H1 (cell line): ENCODE measurements at regions of chr2 and their contacts with region 1.

Region 1: DNA sequence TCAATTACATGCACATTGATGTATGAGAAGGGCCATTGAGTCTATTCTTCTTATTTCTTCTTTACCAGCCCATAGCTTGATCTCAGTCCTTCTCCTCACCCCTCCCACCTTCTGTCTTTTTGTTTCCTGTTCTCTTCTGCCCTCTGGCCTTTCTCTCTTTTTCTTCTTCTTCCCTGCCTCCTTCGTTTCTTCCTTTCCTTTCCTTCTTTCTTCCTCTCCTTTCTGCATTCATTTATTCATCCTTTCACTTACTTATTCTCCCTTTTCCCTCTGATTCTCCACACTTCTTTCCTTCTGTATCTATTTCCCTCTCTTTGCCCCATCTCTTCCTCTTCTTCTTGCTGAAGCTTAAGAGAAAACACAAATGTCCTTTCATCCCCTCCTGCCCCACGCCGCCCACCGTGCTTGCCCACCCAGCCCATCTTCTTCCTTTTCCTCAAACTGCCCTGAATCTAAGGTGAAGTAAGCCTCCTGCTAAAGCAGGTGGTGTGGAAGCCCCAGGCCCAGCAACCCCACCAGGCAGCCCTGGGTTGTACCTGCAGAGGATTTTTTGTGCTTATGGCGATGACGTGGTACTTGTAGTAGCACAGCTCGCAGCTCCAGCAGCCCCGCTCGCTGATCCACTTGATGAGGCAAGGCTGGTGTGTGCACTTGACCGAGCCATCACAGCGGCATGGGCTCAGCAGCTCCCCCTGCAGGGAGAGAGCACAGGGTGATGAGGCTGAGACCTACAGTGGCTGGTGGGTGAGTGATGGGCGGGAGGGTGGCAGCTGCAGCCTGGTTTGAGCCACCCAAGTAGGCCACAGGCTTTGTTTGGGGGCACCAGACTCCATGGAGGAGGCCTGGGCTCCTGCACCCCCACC is 89.0 kb downstream of the MARCHF4 start:
- DNase-seq: peak; percentile 83 to 95
- H3K4me3 ChIP-seq: no peak overlapping the region
- H3K27ac ChIP-seq: no peak overlapping the region
- H3K4me1 ChIP-seq: peaks cover 11 to 38% (median 18%) of the 10 kb centered on the region in 4 experiments
- H3K27me3 ChIP-seq: no peaks in the 10 kb centered on the region
- CTCF ChIP-seq: peak; percentile 88 to 100 (median 99)
- EP300 ChIP-seq: no peak
- POLR2A ChIP-seq: no peak
- RAD21 ChIP-seq: peak; percentile 76 to 83

Region 2: DNA sequence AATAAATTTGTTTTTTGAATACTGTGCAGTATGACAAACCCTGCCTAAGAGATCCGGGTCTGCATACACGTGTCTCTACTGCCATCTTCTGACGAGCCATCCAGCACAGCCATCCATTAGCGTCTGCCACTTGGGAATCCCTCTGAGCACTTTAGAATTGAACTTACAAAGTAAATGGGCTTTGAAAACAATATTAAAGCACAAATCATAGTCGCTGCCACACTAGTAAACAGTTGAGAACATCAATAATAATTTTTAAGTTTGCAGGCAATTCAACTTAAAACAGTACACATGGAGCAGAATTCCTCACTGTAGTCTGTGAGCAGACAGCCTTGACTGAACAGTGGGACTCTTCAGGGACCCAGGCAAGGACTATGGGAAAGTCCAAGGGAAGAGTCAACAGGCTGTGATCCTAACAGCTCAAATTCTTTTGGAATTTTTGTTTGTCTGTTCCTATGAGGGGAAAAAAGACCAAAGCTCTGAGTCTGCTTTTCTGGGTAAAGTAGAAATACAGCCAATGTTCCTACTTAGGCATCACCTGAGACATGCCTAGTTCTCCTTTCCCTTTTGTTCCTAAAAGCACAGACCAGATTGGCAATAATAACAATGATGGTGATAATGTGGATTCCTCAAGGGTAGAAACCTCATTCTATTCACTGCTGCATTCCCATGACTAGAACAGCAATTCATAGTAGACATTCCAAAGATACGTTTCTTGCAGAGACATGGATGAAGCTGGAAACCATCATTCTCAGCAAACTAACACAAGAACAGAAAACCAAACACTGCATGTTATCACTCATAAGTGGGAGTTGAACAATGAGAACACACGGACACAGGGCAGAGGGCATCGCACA is 362.8 kb before region 1 on chr2:
- CTCF ChIA-PET with region 1: no interaction called
- POLR2A ChIA-PET with region 1: no interaction called
- DNase-seq: peak in 1 of 2 experiments; percentile 64
- H3K4me3 ChIP-seq: no peak overlapping the region
- H3K27ac ChIP-seq: no peak overlapping the region
- H3K4me1 ChIP-seq: peaks cover 0 to 16% (median 6%) of the 10 kb centered on the region in 4 experiments; a peak in 3 of 7 replicates
- H3K27me3 ChIP-seq: no peaks in the 10 kb centered on the region
- CTCF ChIP-seq: peak; percentile 80 to 88 (median 81)
- EP300 ChIP-seq: no peak
- POLR2A ChIP-seq: no peak
- RAD21 ChIP-seq: peak; percentile 98

Region 3: GRCh38 chr2:216222650-216223352 is 60.5 kb before region 1 on chr2:
- CTCF ChIA-PET with region 1: interaction called, 28 read pairs
- POLR2A ChIA-PET with region 1: no interaction called
- DNase-seq: no peak
- H3K4me3 ChIP-seq: no peak overlapping the region
- H3K27ac ChIP-seq: no peak overlapping the region
- H3K4me1 ChIP-seq: no peaks in the 10 kb centered on the region
- H3K27me3 ChIP-seq: no peaks in the 10 kb centered on the region
- CTCF ChIP-seq: peak; percentile 71 to 77 (median 76)
- EP300 ChIP-seq: no peak
- POLR2A ChIP-seq: no peak
- RAD21 ChIP-seq: peak; percentile 87

Region 4: DNA sequence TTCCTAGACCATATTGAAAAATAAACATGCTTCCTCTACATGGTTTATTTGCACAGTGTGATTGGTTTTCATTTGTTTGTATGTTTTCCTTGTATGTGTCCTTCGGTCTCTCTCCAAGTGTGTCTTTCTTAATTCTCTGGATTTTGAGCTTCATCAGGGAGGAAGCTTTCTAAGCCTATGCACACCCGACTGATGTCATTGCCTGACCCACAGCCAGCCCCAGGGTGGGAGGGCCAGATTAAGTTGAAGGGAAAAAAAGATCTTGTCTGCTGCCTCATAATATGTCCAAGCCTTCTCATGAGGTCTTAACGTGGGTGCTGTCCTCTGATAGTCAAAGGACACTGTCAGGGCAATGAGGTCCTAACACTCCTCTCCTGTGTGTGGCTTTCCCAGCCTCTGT is 26.2 kb before region 1 on chr2:
- CTCF ChIA-PET with region 1: interaction called, 13 read pairs
- POLR2A ChIA-PET with region 1: no interaction called
- DNase-seq: no peak
- H3K4me3 ChIP-seq: no peak overlapping the region
- H3K27ac ChIP-seq: no peak overlapping the region
- H3K4me1 ChIP-seq: no peaks in the 10 kb centered on the region
- H3K27me3 ChIP-seq: no peaks in the 10 kb centered on the region; a peak in 1 of 7 replicates
- CTCF ChIP-seq: no peak
- EP300 ChIP-seq: no peak
- POLR2A ChIP-seq: no peak
- RAD21 ChIP-seq: no peak

Region 5: GRCh38 chr2:216308576-216308975 is 25.3 kb after region 1 on chr2:
- CTCF ChIA-PET with region 1: interaction called, 29 read pairs
- POLR2A ChIA-PET with region 1: interaction called, 3 read pairs
- DNase-seq: no peak
- H3K4me3 ChIP-seq: no peak overlapping the region
- H3K27ac ChIP-seq: no peak overlapping the region
- H3K4me1 ChIP-seq: peaks cover 0 to 4% (median 3%) of the 10 kb centered on the region in 4 experiments; a peak in 4 of 7 replicates
- H3K27me3 ChIP-seq: no peaks in the 10 kb centered on the region
- CTCF ChIP-seq: no peak
- EP300 ChIP-seq: no peak
- POLR2A ChIP-seq: no peak
- RAD21 ChIP-seq: no peak

Region 6: DNA sequence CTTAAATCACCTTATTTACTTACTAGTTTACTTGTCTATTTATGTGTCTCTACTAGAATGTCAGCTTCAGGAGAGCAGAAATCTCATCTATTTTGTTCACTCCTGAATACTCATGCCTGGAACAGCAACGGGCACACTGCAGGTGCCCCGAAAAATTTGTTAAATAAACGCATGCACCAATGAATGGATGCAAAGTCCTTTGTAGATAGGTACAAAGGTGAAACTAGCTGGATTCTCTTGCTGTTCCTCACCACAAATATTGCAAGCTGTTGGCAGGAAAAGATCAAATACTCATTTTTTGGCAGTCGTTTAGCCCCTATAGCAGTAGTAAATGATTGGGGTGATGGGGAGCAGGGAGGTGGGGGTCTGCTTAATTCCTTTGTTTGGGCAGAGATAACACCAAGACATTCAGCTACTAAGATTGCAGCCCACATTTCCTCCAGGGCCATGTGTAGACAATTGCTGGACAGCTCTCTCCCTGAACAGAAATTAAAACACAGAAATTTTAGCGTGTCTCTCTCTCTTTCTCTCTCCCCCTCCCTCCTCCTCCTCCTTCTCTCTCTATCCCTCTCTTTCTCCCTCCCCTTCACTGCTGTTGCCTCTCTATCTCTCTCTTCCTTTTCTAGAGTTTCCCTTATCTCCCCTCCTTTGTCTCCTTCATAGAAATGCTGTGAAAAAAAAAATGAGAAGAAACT is 83.7 kb after region 1 on chr2:
- CTCF ChIA-PET with region 1: interaction called, 16 read pairs
- POLR2A ChIA-PET with region 1: no interaction called
- DNase-seq: no peak
- H3K4me3 ChIP-seq: no peak overlapping the region
- H3K27ac ChIP-seq: no peak overlapping the region
- H3K4me1 ChIP-seq: peaks cover 3 to 16% (median 4%) of the 10 kb centered on the region in 4 experiments; a peak in 5 of 7 replicates
- H3K27me3 ChIP-seq: peaks cover 0 to 3% (median 0%) of the 10 kb centered on the region in 4 experiments; a peak in 4 of 7 replicates
- CTCF ChIP-seq: no peak
- EP300 ChIP-seq: no peak
- POLR2A ChIP-seq: no peak
- RAD21 ChIP-seq: no peak